Esophagus muscularis mucosa (tissue), 4 donors: ENCODE measurements at regions of chr11 and their contacts with region 1.

Region 1: GRCh38 chr11:6603287-6604080 is at the starts of genes ILK and RRP8:
- DNase-seq: peak; percentile 97
- H3K4me3 ChIP-seq: peak within 1 kb of the TSS; percentile 80 to 99 (median 86)
- H3K27ac ChIP-seq: peak within 1 kb of the TSS; percentile 97 to 98 (median 98)
- H3K4me1 ChIP-seq: peaks cover 59 to 84% (median 76%) of the 10 kb centered on the region in 4 donors
- H3K27me3 ChIP-seq: no peaks in the 10 kb centered on the region
- CTCF ChIP-seq: peak; percentile 27 to 52 (median 47)
- EP300 ChIP-seq: no peak
- POLR2A ChIP-seq: peak; percentile 76
- total RNA-seq, gene ILK: 481 to 652 (median 606) TPM
- total RNA-seq, gene RRP8: 12.4 to 34.0 (median 27.0) TPM

Region 2: DNA sequence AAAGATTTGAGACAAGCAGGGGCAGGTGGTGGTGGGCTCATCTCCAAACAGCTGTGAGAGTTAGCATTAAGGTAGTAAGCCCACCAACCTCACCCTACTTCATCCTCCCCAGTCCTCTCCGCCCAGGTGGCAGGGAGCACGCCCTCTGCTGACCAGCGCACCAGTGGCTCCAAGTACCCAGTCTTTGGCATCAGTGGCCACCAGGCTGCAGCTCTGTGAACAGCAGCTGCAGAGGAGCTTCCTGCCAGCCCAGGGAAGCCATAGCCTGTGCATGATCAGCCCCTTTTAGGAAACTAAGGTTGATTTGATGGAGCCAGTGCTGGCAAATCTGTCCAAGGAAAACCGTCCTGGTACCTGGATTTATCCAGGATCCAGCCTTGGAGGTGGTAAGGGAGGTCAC is 304.9 kb before region 1 on chr11:
- intact Hi-C with region 1: no loop called
- DNase-seq: no peak
- H3K4me3 ChIP-seq: no peak overlapping the region
- H3K27ac ChIP-seq: no peak overlapping the region
- H3K4me1 ChIP-seq: no peaks in the 10 kb centered on the region
- H3K27me3 ChIP-seq: no peaks in the 10 kb centered on the region
- CTCF ChIP-seq: peak in 1 of 3 experiments; percentile 38
- EP300 ChIP-seq: no peak
- POLR2A ChIP-seq: no peak

Region 3: GRCh38 chr11:6389921-6390724 is 213.4 kb before region 1 on chr11 and contains the start of gene SMPD1:
- intact Hi-C with region 1: loop called (anchors 10 kb)
- DNase-seq: peak; percentile 97
- H3K4me3 ChIP-seq: peak within 1 kb of the TSS; percentile 75 to 89 (median 87)
- H3K27ac ChIP-seq: peak within 1 kb of the TSS; percentile 87 to 95 (median 90)
- H3K4me1 ChIP-seq: peaks cover 15 to 36% (median 32%) of the 10 kb centered on the region in 4 donors
- H3K27me3 ChIP-seq: no peaks in the 10 kb centered on the region
- CTCF ChIP-seq: peak in 1 of 3 experiments; percentile 12
- EP300 ChIP-seq: no peak
- POLR2A ChIP-seq: peak; percentile 26
- total RNA-seq, gene SMPD1: 28.2 to 37.9 (median 30.8) TPM

Region 4: GRCh38 chr11:6473481-6474422 is 129.7 kb before region 1 on chr11 and contains the start of gene TRIM3:
- intact Hi-C with region 1: loop called (anchors 10 kb)
- DNase-seq: peak; percentile 99
- H3K4me3 ChIP-seq: peak within 1 kb of the TSS; percentile 81 to 94 (median 87)
- H3K27ac ChIP-seq: peak within 1 kb of the TSS; percentile 90 to 95 (median 92)
- H3K4me1 ChIP-seq: peaks cover 8 to 47% (median 37%) of the 10 kb centered on the region in 4 donors
- H3K27me3 ChIP-seq: no peaks in the 10 kb centered on the region
- CTCF ChIP-seq: peak in 2 of 3 experiments; percentile 19 to 27
- EP300 ChIP-seq: no peak
- POLR2A ChIP-seq: peak; percentile 72
- total RNA-seq, gene TRIM3: 26.6 to 47.6 (median 35.3) TPM

Region 5: DNA sequence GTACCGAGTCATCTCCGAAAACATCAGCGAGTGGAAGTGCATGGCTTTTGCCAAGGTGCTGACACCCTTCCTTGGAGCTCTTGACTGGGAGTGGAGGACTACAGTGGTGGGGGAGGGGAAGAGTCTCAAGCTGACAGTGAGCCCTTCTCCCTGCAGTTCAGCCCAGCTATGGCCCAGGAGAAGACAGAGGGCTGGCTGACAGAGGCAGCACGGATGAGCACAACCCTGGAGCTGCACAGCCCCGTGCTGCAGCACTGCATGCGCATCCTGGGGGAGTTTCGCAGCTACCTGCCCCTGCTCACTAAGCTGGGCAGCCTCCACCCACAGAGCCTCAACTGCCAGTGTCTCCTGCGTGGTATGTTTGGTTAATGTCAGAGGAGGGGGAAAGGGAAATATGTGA is 65.0 kb before region 1 on chr11:
- intact Hi-C with region 1: no loop called
- DNase-seq: peak; percentile 77
- H3K4me3 ChIP-seq: no peak overlapping the region
- H3K27ac ChIP-seq: no peak overlapping the region
- H3K4me1 ChIP-seq: no peaks in the 10 kb centered on the region
- H3K27me3 ChIP-seq: no peaks in the 10 kb centered on the region
- CTCF ChIP-seq: no peak
- EP300 ChIP-seq: no peak
- POLR2A ChIP-seq: no peak

Region 6: DNA sequence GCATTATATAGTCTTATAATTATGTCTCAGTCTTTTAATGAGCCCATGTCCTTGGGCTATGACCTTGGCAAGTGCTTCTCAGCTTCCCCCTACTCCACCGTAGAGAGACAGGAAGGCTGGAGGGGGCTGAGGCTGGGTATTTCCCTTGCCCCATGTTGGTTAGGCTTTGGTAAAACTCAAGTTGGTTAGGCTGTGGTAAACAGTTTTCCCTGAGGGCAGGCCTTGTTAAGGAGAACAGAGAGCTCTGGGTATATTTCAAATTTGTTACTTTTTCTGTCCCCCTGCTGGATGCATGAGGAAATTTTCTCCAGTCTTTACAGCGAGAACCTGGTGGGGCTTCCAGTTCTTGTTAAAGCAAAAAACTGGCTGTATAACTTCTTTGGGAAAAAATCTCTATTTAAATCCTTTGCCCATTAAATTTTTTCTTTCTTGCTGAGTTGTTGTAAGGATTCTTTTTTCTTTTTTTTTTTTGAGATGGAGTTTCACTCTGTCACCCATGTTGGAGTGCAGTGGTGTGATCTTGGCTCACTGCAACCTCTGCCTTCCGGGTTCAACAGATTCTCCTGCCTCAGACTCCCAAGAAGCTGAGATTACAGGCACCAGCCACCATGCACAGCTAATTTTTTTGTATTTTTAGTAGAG is 64.4 kb after region 1 on chr11:
- intact Hi-C with region 1: no loop called
- DNase-seq: no peak
- H3K4me3 ChIP-seq: no peak overlapping the region
- H3K27ac ChIP-seq: no peak overlapping the region
- H3K4me1 ChIP-seq: peaks cover 0 to 10% (median 0%) of the 10 kb centered on the region in 4 donors
- H3K27me3 ChIP-seq: no peaks in the 10 kb centered on the region
- CTCF ChIP-seq: peak; percentile 43 to 62 (median 44)
- EP300 ChIP-seq: no peak
- POLR2A ChIP-seq: no peak

Region 7: DNA sequence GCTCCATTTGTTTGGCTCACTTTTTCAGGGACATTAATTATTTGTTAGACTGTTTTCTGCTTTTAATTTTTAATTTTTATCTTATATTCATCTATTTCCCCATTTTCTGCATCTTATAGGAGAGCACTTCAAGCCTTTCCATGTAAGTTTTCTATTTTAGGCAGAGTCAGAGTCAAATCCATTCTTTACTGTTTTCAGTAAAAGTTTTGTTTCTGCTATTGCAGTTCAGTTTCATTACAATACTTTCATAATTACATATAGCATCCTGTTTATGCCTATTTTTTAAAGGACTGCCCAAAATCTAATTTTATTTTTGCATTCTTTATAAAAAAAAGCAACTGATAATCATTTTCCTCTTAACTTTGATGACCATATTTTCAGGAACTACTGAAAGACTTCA is 238.2 kb after region 1 on chr11:
- intact Hi-C with region 1: no loop called
- DNase-seq: no peak
- H3K4me3 ChIP-seq: no peak overlapping the region
- H3K27ac ChIP-seq: no peak overlapping the region
- H3K4me1 ChIP-seq: no peaks in the 10 kb centered on the region
- H3K27me3 ChIP-seq: peaks cover 0 to 3% (median 0%) of the 10 kb centered on the region in 4 donors
- CTCF ChIP-seq: no peak
- EP300 ChIP-seq: no peak
- POLR2A ChIP-seq: no peak